Caco-2 (cell line): ENCODE measurements at regions of chr15 and their contacts with region 1.

Region 1: GRCh38 chr15:65133548-65134200 is at the start of gene PDCD7:
- DNase-seq: peak; percentile 83 to 85
- H3K4me3 ChIP-seq: peak within 1 kb of the TSS; percentile 74
- H3K4me3 Mint-ChIP-seq: peak within 1 kb of the TSS; percentile 85
- H3K27ac Mint-ChIP-seq: peak within 1 kb of the TSS; percentile 86
- H3K4me1 ChIP-seq: 0 out of 2 replicates have a peak, but pooled peaks cover 3% of the 10 kb centered on the region
- H3K4me1 Mint-ChIP-seq: no peaks in the 10 kb centered on the region
- H3K27me3 ChIP-seq: no peaks in the 10 kb centered on the region
- H3K27me3 Mint-ChIP-seq: no peaks in the 10 kb centered on the region
- CTCF ChIP-seq: no peak
- total RNA-seq, gene PDCD7: 26.2 and 32.6 TPM in 2 replicates

Region 2: GRCh38 chr15:64749999-64750657 is 383.5 kb before region 1 on chr15:
- CTCF ChIA-PET with region 1: no interaction called
- POLR2A ChIA-PET with region 1: no interaction called
- intact Hi-C with region 1: no loop called
- DNase-seq: peak in 1 of 2 experiments; percentile 53
- H3K4me3 ChIP-seq: no peak overlapping the region
- H3K4me3 Mint-ChIP-seq: no peak overlapping the region
- H3K27ac Mint-ChIP-seq: no peak overlapping the region
- H3K4me1 ChIP-seq: no peaks in the 10 kb centered on the region
- H3K4me1 Mint-ChIP-seq: no peaks in the 10 kb centered on the region
- H3K27me3 ChIP-seq: no peaks in the 10 kb centered on the region
- H3K27me3 Mint-ChIP-seq: no peaks in the 10 kb centered on the region
- CTCF ChIP-seq: peak in 1 of 2 experiments; percentile 12

Region 3: GRCh38 chr15:65298731-65299130 is 165.1 kb after region 1 on chr15:
- CTCF ChIA-PET with region 1: no interaction called
- POLR2A ChIA-PET with region 1: no interaction called
- intact Hi-C with region 1: loop called (anchors 5 kb)
- DNase-seq: no peak
- H3K4me3 ChIP-seq: no peak overlapping the region
- H3K4me3 Mint-ChIP-seq: no peak overlapping the region
- H3K27ac Mint-ChIP-seq: peak overlapping the region; percentile 61
- H3K4me1 ChIP-seq: peaks cover 9% of the 10 kb centered on the region; the same call in 1 of the 2 replicates
- H3K4me1 Mint-ChIP-seq: no peaks in the 10 kb centered on the region
- H3K27me3 ChIP-seq: no peaks in the 10 kb centered on the region
- H3K27me3 Mint-ChIP-seq: no peaks in the 10 kb centered on the region
- CTCF ChIP-seq: no peak